ENCODE measurements at regions of chr21 and their contacts with region 1.

Region 1: DNA sequence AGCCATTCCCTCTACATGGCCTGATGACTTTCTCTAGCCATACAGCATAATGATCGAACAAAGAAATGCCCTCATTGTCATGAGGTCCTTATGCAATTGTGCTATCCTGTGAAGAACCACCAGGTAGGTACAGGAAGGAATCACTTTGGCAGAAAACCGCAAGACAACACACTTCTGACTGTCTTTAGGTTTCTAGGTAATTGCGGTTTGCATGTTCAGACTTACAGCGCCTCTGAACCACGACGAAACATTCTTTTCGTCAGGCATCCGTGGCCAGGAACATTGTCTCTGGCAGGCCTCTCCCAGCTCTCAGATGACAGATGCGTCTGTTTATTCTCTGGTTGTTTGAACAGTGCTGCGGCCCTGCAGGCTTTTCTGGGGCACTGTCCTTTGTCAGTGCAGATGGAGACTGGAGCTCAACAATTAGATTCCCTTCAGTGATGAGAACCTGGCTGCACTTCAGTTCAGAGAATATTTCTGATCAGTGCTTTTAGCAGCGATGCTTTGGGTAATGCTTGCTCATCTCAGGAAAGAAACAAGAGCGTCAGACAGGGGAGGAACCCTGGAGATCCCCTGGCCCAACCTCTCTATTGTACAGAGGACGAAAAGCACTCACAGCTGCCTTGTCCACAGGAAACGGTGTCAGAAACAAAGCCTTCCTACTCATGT is 63.4 kb downstream of the B3GALT5 start:
- DNase-seq: no peak
- H3K4me3 ChIP-seq: no peak overlapping the region
- H3K27ac ChIP-seq: no peak overlapping the region
- H3K4me1 ChIP-seq: peaks cover 0 to 6% (median under 1%) of the 10 kb centered on the region in 4 experiments; a peak in 4 of 7 replicates
- H3K27me3 ChIP-seq: no peaks in the 10 kb centered on the region
- CTCF ChIP-seq: peak in 1 of 3 experiments; percentile 4; a peak in 1 of 4 replicates
- EP300 ChIP-seq: no peak
- POLR2A ChIP-seq: no peak
- RAD21 ChIP-seq: 0 out of 4 replicates have a peak, but pooled peaks of 1 of the 2 experiments have one; percentile 9

Region 2: GRCh38 chr21:39688010-39688409 is 11.9 kb after region 1 on chr21:
- CTCF ChIA-PET with region 1: interaction called, 14 read pairs
- POLR2A ChIA-PET with region 1: interaction called, 6 read pairs
- DNase-seq: no peak
- H3K4me3 ChIP-seq: no peak overlapping the region
- H3K27ac ChIP-seq: no peak overlapping the region
- H3K4me1 ChIP-seq: peaks cover 0 to 2% (median 0%) of the 10 kb centered on the region in 4 experiments; a peak in 3 of 7 replicates
- H3K27me3 ChIP-seq: no peaks in the 10 kb centered on the region
- CTCF ChIP-seq: no peak
- EP300 ChIP-seq: no peak
- POLR2A ChIP-seq: no peak
- RAD21 ChIP-seq: no peak